ENCODE measurements at regions of chr5 and their contacts with region 1.

Region 1: DNA sequence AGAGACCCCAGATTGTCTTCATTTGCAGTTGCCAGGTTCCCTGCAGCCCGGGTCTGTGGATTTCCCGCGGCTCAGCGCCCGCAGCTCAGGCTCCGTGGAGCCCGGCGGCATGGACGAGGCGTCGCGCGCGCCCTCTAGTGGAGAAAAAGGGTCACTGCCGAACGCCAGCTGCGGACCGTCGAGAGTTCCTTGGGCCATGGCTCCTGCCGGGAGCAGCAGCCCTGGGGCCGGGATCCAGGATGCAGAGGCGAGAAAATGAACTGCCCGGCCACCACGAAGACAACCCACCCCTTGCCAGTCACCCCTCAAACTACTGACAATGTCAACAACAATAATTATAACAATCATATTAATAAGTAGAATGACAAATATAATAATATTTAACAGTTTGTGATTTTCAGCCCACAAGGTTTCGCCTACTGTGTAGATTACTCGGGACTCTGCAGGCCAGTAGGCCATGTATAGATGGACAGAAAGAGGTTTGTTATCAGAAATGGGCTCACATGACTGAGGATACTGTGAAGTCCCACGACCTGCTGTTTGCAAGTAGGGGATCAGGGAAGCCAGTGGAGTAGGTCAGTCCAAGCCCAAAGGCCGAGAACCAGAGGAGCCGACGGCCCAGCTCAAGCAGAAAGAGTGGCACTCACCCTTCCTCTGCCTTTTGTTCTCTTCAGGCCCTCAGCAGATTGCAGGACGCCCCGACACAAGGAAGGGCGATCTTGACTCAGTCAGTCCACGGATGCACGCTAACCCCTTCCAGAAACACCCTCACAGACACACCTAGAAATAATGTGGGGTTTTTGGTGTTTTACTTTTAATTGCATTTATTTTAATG is 43.1 kb downstream of the BOD1 start:
- DNase-seq: no peak
- H3K4me3 ChIP-seq: peak overlapping the region; percentile 21; the same call in 1 of the 2 replicates
- CTCF ChIP-seq: peak; percentile 99

Region 2: GRCh38 chr5:173302547-173303066 is 270.7 kb before region 1 on chr5:
- CTCF ChIA-PET with region 1: interaction called, 11 read pairs
- POLR2A ChIA-PET with region 1: no interaction called
- DNase-seq: no peak
- H3K4me3 ChIP-seq: no peak overlapping the region
- CTCF ChIP-seq: no peak

Region 3: GRCh38 chr5:173331956-173332479 is 241.3 kb before region 1 on chr5:
- CTCF ChIA-PET with region 1: interaction called, 33 read pairs
- POLR2A ChIA-PET with region 1: interaction called, 7 read pairs
- DNase-seq: no peak
- H3K4me3 ChIP-seq: no peak overlapping the region
- CTCF ChIP-seq: peak; percentile 93

Region 4: DNA sequence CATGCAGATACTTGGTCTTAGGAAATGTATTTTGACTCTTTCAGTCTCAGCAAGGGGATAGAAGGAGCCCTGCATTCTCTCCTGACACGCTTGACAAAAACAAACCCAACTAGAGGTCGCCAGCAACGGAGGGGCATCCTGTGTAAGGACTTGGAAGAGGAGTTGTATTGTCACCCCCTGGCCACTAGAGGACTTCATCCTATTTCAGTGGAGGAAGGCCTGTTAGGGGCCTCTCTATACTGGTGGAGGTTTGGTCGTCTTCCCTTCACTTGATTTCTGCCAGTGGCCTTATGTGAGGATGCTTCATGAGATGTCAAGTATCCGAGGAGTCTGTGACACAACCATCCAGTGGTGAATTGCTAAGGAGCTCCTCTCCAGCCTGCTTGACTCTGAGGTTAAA is 122.3 kb before region 1 on chr5:
- CTCF ChIA-PET with region 1: interaction called, 11 read pairs
- POLR2A ChIA-PET with region 1: no interaction called
- DNase-seq: no peak
- H3K4me3 ChIP-seq: no peak overlapping the region
- CTCF ChIP-seq: peak; percentile 19

Region 5: GRCh38 chr5:173554038-173554954 is 19.0 kb before region 1 on chr5:
- CTCF ChIA-PET with region 1: interaction called, 22 read pairs
- POLR2A ChIA-PET with region 1: no interaction called
- DNase-seq: no peak
- H3K4me3 ChIP-seq: no peak overlapping the region
- CTCF ChIP-seq: no peak

Region 6: GRCh38 chr5:174045470-174046025 is 472.2 kb after region 1 on chr5 and contains the start of gene NSG2:
- CTCF ChIA-PET with region 1: no interaction called
- POLR2A ChIA-PET with region 1: no interaction called
- DNase-seq: peak; percentile 41
- H3K4me3 ChIP-seq: no peak within 1 kb of the TSS
- CTCF ChIP-seq: peak; percentile 71

Measured in AG04449 (cell line).